Activated CD8-positive, alpha-beta T cell treated with anti-CD3 and anti-CD28 coated beads for 36 hours (primary cell): ENCODE measurements at regions of chr3 and their contacts with region 1.

Region 1: GRCh38 chr3:152471814-152472671 is 203.3 kb downstream of the MBNL1 start:
- DNase-seq: peak; percentile 86
- ATAC-seq: peak; percentile 86
- H3K4me3 Mint-ChIP-seq: peak overlapping the region; percentile 31
- H3K27ac Mint-ChIP-seq: peak overlapping the region; percentile 22
- H3K4me1 Mint-ChIP-seq: peaks cover 9% of the 10 kb centered on the region
- H3K27me3 Mint-ChIP-seq: no peaks in the 10 kb centered on the region
- CTCF ChIP-seq: peak; percentile 92

Region 2: DNA sequence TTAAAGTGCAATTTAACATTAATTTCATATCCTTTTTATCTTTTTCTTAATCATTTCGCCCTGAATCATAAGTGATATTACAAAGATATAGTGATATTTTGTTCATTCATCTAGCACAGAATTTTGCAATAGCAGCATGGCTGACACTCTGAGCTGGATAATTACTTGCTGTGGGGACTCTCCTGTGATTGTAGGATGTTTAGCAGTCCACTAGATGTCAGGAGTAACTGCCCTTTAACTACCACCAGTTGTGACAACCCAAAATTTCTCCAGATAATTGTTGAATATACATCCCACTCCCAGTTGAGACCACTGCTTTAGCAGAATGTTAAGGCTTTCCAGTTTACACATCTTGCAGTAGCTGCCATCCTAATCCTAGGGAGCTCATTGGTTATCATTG is 400.1 kb before region 1 on chr3:
- CTCF ChIA-PET with region 1: interaction called, 20 read pairs
- POLR2A ChIA-PET with region 1: interaction called, 3 read pairs
- intact Hi-C with region 1: loop called (anchors 5 kb)
- DNase-seq: peak; percentile 6
- ATAC-seq: peak; percentile 84
- H3K4me3 Mint-ChIP-seq: no peak overlapping the region
- H3K27ac Mint-ChIP-seq: no peak overlapping the region
- H3K4me1 Mint-ChIP-seq: no peaks in the 10 kb centered on the region
- H3K27me3 Mint-ChIP-seq: no peaks in the 10 kb centered on the region
- CTCF ChIP-seq: peak; percentile 59

Region 3: GRCh38 chr3:152183473-152183872 is 288.6 kb before region 1 on chr3:
- CTCF ChIA-PET with region 1: interaction called, 7 read pairs
- POLR2A ChIA-PET with region 1: interaction called, 3 read pairs
- intact Hi-C with region 1: loop called (anchors 10 kb)
- DNase-seq: peak; percentile 82
- ATAC-seq: peak; percentile 91
- H3K4me3 Mint-ChIP-seq: peak overlapping the region; percentile 32
- H3K27ac Mint-ChIP-seq: peak overlapping the region; percentile 72
- H3K4me1 Mint-ChIP-seq: peaks cover 57% of the 10 kb centered on the region
- H3K27me3 Mint-ChIP-seq: no peaks in the 10 kb centered on the region
- CTCF ChIP-seq: peak; percentile 71

Region 4: DNA sequence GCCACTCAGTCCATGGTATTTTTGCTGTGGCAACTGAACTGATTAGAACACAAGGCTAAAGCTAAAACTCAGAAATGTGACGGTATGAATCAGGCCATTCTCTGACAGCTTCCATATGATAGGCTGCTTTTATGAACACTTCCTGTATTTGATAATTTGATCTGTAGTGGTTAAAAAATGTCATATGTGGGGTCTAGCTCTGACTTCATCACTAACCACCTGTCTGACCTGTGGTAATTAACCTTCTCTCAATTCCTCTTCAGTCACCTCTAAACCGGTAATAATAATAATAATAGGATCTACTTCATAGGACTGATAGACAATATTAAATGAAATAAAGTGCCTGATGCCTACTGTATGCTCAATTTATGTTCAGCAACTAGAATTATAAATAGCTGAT is 19.9 kb after region 1 on chr3:
- CTCF ChIA-PET with region 1: interaction called, 11 read pairs
- POLR2A ChIA-PET with region 1: no interaction called
- intact Hi-C with region 1: no loop called
- DNase-seq: no peak
- ATAC-seq: no peak
- H3K4me3 Mint-ChIP-seq: no peak overlapping the region
- H3K27ac Mint-ChIP-seq: no peak overlapping the region
- H3K4me1 Mint-ChIP-seq: peaks cover 4% of the 10 kb centered on the region
- H3K27me3 Mint-ChIP-seq: peaks cover 5% of the 10 kb centered on the region
- CTCF ChIP-seq: no peak

Region 5: DNA sequence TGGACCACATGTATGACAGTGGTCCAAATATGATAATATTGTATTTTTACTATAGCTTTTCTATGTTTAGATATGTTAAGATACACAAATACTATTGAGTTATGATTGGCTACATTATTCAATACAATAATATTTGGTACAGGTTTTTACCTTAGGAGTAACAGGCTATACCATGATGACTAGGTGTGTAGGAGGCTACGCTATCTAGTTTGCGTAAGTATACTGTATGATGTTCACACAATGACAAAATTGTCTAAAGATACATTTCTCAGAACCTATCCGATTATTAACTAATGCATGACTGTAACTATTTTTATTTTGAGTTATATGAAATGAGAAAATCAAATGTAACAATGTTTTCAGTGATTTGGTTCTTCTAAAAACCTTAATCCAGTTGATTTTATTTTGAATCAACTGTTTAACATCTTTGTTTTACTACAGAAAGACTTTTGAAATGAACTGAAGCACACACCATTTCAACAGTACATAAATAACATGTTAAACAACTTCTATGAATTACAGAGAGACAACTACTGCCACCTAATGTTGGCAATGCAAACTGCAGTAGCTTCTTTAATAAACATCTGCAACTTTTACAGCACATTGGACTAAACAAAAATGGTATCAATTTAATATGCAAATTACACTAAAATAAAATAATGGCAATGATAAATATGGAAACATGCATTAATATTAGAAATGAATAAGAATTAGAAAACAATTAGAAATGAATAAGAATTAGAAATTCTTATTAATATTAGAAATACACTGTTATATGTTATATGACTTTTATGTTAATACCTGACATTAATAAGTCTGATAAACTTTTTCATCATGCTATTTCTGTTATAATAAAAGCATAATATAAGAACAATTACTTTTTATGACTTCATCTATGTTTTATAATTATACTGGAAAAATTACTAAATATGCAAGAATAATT is 52.4 kb after region 1 on chr3:
- CTCF ChIA-PET with region 1: interaction called, 15 read pairs
- POLR2A ChIA-PET with region 1: no interaction called
- intact Hi-C with region 1: loop called (anchors 5 kb)
- DNase-seq: peak; percentile 72
- ATAC-seq: peak; percentile 60
- H3K4me3 Mint-ChIP-seq: no peak overlapping the region
- H3K27ac Mint-ChIP-seq: no peak overlapping the region
- H3K4me1 Mint-ChIP-seq: no peaks in the 10 kb centered on the region
- H3K27me3 Mint-ChIP-seq: no peaks in the 10 kb centered on the region
- CTCF ChIP-seq: peak; percentile 88

Region 6: DNA sequence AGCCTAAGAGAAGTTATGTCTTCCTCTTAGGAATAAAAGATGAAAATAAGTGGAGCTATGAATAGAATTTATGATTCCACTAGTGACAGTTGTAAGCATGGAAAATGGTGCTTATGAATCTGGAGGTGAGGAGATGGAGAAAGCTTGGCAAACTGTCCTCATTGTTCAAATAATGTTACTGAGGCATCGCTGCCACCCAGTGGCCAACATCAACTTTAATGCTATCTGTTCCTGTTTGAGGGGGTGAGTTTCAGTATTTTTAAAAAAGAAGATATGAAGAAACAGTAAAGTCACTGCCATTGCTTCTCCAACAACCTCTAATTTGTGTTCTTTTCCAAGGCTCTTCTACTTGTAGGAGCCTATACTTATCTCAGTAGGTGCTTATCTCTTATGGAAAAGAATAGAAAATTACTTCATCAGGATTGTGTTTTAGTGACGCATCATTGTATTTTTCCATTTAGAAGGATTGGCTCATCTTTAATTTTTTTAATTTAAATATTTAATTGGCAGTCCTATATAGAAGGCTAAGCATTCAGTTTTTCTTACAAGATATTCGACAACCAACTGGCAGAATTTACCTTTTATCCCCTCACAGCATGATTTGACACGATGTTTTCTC is 102.5 kb after region 1 on chr3:
- CTCF ChIA-PET with region 1: interaction called, 19 read pairs
- POLR2A ChIA-PET with region 1: no interaction called
- intact Hi-C with region 1: loop called (anchors 10 kb)
- DNase-seq: peak; percentile 67
- ATAC-seq: no peak
- H3K4me3 Mint-ChIP-seq: no peak overlapping the region
- H3K27ac Mint-ChIP-seq: no peak overlapping the region
- H3K4me1 Mint-ChIP-seq: no peaks in the 10 kb centered on the region
- H3K27me3 Mint-ChIP-seq: peaks cover 6% of the 10 kb centered on the region
- CTCF ChIP-seq: peak; percentile 53